Endothelial cell of umbilical vein (primary cell): ENCODE measurements at regions of chr7 and their contacts with region 1.

Region 1: GRCh38 chr7:13990984-13991790 is 1.7 kb upstream of the ETV1 start:
- DNase-seq: peak; percentile 98
- H3K4me3 ChIP-seq: peak overlapping the region; percentile 79 to 98 (median 96)
- H3K27ac ChIP-seq: peak overlapping the region; percentile 88
- H3K4me1 ChIP-seq: peaks cover 16% of the 10 kb centered on the region
- H3K27me3 ChIP-seq: no peaks in the 10 kb centered on the region
- CTCF ChIP-seq: no peak
- POLR2A ChIP-seq: no peak

Region 2: DNA sequence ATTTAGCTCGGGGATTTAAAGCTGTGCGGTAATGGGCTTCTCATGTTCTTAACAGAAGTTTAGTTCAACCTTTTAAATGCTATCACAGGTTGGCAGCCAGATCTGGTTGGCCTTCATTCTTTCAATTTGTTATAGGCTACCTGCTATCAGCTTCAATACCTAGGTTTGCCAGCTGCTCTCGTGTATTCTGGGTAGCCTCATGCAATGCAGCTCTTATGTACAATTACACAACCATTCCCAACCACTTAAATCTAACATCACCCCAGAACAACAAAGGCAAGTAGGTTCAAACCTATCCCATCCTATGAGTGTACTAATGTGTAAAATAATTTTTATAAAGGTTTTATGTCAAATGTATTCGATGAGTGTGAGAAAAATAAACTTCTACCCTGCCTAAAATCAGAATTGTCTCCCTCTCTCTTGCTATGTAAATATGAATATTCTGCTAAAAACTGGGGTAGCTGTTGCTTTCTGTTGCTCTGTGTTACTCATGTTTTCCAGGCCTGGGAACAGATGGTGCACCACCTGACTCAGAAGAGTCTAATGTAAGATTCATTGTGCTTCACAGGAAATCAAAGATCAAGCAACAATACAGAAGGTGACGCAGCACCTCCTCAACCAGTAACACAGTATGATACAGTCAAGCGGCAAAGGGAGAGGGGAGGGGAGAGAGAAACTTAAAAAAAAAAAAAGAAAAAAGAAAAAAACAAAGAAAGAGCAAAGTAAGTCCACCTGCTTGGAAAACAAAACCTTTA is 190.3 kb before region 1 on chr7:
- CTCF ChIA-PET with region 1: no interaction called
- POLR2A ChIA-PET with region 1: no interaction called
- dilution Hi-C with region 1: no loop called
- intact Hi-C with region 1: loop called (anchors 1 kb)
- DNase-seq: peak; percentile 87
- H3K4me3 ChIP-seq: no peak overlapping the region
- H3K27ac ChIP-seq: peak overlapping the region; percentile 68
- H3K4me1 ChIP-seq: peaks cover 3% of the 10 kb centered on the region
- H3K27me3 ChIP-seq: no peaks in the 10 kb centered on the region
- CTCF ChIP-seq: no peak
- POLR2A ChIP-seq: no peak

Region 3: GRCh38 chr7:13860734-13861133 is 130.5 kb before region 1 on chr7:
- CTCF ChIA-PET with region 1: interaction called, 13 read pairs
- POLR2A ChIA-PET with region 1: no interaction called
- dilution Hi-C with region 1: no loop called
- intact Hi-C with region 1: no loop called
- DNase-seq: no peak
- H3K4me3 ChIP-seq: no peak overlapping the region
- H3K27ac ChIP-seq: no peak overlapping the region
- H3K4me1 ChIP-seq: no peaks in the 10 kb centered on the region
- H3K27me3 ChIP-seq: no peaks in the 10 kb centered on the region
- CTCF ChIP-seq: no peak
- POLR2A ChIP-seq: no peak

Region 4: GRCh38 chr7:13981070-13981469 is 10.1 kb before region 1 on chr7:
- CTCF ChIA-PET with region 1: interaction called, 72 read pairs
- POLR2A ChIA-PET with region 1: interaction called, 7 read pairs
- dilution Hi-C with region 1: no loop called
- intact Hi-C with region 1: loop called (anchors 1 kb)
- DNase-seq: peak; percentile 90
- H3K4me3 ChIP-seq: no peak overlapping the region
- H3K27ac ChIP-seq: peak overlapping the region; percentile 56
- H3K4me1 ChIP-seq: peaks cover 28% of the 10 kb centered on the region
- H3K27me3 ChIP-seq: no peaks in the 10 kb centered on the region
- CTCF ChIP-seq: no peak
- POLR2A ChIP-seq: no peak

Region 5: GRCh38 chr7:14748461-14748860 is 757.3 kb after region 1 on chr7:
- CTCF ChIA-PET with region 1: no interaction called
- POLR2A ChIA-PET with region 1: no interaction called
- dilution Hi-C with region 1: no loop called
- intact Hi-C with region 1: loop called (anchors 2 kb)
- DNase-seq: peak; percentile 95
- H3K4me3 ChIP-seq: no peak overlapping the region
- H3K27ac ChIP-seq: peak overlapping the region; percentile 60
- H3K4me1 ChIP-seq: peaks cover 28% of the 10 kb centered on the region
- H3K27me3 ChIP-seq: no peaks in the 10 kb centered on the region
- CTCF ChIP-seq: no peak
- POLR2A ChIP-seq: peak; percentile 34